Brain microvascular endothelial cell (primary cell): ENCODE measurements at regions of chr22 and their contacts with region 1.

Region 1: GRCh38 chr22:39520054-39520891 is at the start of gene ATF4:
- DNase-seq: peak; percentile 99
- H3K4me3 ChIP-seq: peak within 1 kb of the TSS; percentile 96
- H3K27ac ChIP-seq: peak within 1 kb of the TSS; percentile 99
- H3K27me3 ChIP-seq: no peaks in the 10 kb centered on the region
- CTCF ChIP-seq: no peak

Region 2: DNA sequence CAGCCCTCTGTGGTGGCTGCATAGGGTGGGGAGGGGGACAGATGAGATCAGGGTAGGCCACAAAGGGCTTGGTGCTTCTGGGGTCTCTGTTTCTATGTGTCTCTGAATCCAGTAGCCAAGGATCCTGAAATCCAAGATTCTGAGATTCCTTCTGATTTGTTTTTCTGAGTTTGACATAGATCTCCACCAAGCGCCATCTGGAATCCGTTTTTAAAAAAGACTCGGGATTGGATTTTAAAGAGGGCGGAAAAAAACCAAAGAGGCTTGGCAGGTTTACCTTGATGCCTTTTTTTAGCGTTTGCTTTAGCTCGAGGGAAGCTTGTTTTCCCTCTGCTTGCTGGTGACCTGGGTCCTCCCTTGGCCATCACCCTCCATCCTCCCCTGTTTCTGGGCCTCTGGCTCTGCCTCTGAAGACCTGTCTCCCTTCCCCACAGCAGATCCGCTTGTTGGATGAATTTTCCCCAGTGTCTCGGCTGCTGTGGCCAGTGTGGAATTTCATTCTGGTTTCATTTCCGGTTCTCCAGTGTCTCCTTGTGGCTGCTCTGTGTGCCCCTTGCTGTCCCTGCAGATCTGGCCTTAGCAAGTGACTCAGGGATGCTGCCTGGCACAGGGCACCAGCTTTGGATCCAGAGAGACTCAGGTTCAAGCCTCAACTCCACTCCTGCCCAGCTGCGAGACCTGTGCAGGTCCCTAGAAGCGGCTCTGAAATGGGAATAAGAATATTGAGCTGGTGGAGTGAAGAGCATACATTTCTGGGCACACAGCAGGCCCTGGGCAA is 155.4 kb before region 1 on chr22:
- in situ Hi-C with region 1: no loop called
- DNase-seq: no peak
- H3K4me3 ChIP-seq: no peak overlapping the region
- H3K27ac ChIP-seq: no peak overlapping the region
- H3K27me3 ChIP-seq: no peaks in the 10 kb centered on the region
- CTCF ChIP-seq: no peak

Region 3: DNA sequence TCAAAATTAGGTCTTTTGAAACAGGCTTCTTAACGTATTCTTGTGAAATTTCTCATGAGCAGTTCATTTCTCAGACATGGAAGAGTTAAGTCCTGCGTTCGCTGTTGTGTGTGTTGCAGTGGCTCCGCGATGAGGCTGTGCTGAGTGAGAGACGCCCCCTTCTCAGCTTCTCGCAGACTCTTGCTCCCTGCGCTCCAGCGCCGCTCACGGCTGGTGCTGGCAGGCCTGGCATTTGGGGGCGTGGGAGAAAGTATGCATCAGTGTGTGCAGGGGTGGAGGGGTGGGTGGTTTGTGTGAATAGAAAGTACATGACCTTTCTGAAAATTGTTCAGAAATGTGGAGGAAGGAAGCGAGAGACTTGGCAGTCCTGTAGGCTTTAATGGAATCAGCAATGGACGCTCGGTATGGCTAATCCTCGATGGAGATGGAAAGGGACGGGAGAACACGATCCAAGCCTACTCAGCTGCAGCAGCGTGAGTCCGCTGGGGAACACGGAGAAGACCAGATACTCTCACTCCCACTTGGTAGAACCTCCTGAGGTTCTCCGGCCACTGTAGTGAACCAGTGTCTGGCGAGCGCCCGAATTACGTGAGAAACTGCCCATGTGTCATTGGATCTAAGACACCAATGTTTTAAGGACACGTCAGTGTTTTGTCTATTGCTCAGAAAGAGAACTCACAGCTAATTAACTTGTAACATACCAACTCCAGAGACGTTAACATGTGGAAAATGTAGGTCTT is 114.8 kb before region 1 on chr22:
- in situ Hi-C with region 1: loop called (anchors 25 kb)
- DNase-seq: peak; percentile 75
- H3K4me3 ChIP-seq: peak overlapping the region; percentile 35
- H3K27ac ChIP-seq: peak overlapping the region; percentile 68
- H3K27me3 ChIP-seq: no peaks in the 10 kb centered on the region
- CTCF ChIP-seq: peak; percentile 61

Region 4: DNA sequence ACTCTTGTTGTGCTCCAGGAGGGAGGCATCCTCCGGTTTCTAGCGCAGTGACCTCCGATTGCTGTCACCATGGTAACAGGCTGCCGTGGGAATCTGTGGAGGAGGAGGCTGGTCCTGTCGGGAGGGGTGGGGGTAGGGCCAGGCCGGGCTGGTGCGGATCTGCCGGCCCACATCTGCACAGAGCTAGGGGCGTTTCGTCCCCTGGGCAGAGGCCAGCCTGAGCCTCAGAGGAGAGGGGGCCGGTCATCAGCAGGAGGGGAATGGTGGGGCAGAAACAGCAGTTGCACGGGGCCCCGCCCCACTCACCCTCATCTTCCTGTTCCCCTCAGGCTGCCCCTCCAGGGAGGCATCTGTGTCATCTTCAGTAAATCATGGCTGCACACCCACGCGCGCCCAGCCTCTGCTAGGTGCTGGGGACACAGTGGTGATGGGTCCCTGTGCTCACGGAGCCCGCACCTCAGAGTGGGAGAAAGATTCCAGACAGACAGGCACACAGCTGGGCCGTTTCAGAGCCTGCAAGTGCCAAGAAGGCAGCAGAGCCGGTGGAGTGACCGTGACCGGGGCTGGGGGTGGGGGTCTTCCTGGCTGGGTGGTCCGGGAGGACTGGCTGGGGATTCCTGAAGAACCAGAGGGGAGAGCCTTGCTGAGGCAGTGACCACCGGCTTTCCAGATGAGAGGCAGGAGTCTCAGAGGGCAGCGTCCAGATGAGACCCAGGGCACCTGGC is 170.8 kb after region 1 on chr22:
- in situ Hi-C with region 1: no loop called
- DNase-seq: no peak
- H3K4me3 ChIP-seq: no peak overlapping the region
- H3K27ac ChIP-seq: no peak overlapping the region
- H3K27me3 ChIP-seq: peaks cover 35% of the 10 kb centered on the region
- CTCF ChIP-seq: no peak